ENCODE measurements at regions of chr17 and their contacts with region 1.

Region 1: DNA sequence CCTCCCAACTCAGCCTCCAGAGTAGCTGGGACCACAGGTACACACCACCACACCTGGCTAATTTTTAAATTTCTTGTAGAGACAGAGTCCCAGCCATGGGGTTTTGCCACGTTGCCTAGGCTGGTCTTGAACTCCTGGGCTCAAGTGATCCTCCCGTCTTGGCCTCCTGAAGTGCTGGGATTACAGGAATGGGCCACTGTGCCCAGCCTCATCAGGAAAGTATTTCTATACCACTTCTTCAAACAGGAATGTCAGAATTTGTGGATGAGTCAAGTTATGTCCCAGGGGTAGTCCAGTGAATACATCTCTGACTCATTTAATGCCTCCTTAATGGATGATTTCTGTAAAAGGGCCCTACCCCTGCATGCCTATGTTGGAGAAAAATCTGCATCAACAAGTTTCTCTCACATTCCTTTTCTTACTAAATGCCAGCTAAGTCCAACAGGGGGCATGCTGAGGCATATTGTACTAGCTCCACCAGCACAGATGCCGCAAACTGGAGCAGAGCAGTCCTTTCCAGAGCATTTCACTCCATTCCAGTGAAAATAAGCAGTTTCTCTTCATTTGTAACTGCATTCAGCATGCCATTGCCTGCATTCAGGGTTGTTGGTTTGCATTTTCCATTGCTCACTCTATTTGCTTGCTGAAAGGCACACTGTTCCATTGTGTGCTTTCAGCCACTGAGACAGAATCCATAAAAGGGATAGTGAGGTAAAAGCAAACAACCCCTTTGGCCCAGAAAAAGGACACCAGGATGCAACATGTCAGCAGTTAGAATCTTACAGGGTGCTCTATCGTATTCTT is 5.3 kb upstream of the CAVIN1 start:
- H3K4me3 ChIP-seq: no peak overlapping the region
- H3K27ac ChIP-seq: no peak overlapping the region; the same call in 1 of the 2 replicates
- H3K4me1 ChIP-seq: no peaks in the 10 kb centered on the region
- CTCF ChIP-seq: peak; percentile 57; the same call in 1 of the 2 replicates

Region 2: DNA sequence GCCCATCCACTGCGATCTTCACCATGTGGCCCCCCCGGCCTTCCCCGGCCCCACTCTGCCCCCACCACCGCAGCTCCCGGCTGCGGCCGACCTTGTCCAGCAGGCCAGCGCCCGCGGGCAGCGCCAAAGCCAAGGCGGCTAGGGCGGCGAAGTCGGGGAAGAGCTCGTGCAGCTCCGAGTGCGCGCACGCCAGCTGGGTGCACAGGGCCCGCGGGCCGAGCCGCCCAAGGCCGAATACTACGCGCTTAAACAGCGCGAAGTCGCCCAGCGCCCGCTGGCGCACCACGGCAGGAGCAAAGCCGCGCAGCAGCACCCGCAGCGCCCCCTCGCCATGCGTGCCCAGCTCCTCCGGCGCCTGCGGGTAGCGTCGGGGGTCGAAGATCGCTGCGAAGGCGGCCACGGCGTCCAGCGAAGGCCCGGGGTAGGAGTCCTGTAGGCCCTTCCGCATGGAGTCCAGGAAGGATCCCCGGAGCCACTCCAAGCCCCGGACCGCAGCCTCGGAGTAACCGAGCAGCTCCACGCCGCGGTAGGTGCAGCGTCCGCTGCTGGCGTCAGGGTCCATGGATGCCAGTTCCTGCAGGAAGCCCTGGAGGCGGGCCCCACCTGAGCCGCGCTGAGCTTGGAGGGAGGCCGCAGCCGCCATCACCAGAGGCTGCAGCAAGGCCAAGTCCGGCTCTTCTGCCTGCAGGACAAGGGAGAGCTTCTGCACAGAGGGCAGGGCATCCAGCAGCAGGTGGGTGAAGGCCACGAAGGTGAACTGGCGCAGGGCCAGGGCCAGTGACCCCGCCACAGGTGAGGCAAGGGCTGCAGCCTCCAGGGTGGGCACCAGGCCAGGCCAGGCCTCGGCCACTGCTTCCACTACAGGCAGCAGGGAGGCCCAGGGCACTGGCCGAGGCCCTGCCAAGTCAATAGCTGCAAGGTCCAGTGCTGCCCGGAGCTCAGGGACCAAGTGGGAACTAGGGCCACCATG is 388.3 kb before region 1 on chr17:
- CTCF ChIA-PET with region 1: no interaction called
- POLR2A ChIA-PET with region 1: no interaction called
- H3K4me3 ChIP-seq: no peak overlapping the region
- H3K27ac ChIP-seq: no peak overlapping the region
- H3K4me1 ChIP-seq: no peaks in the 10 kb centered on the region
- CTCF ChIP-seq: no peak

Region 3: GRCh38 chr17:42414704-42415409 is 13.5 kb before region 1 on chr17:
- CTCF ChIA-PET with region 1: interaction called, 11 read pairs
- POLR2A ChIA-PET with region 1: interaction called, 53 read pairs
- H3K4me3 ChIP-seq: no peak overlapping the region
- H3K27ac ChIP-seq: no peak overlapping the region
- H3K4me1 ChIP-seq: 0 out of 2 replicates have a peak, but pooled peaks cover 3% of the 10 kb centered on the region
- CTCF ChIP-seq: no peak

Region 4: GRCh38 chr17:42438600-42439567 is 10.5 kb after region 1 on chr17:
- CTCF ChIA-PET with region 1: interaction called, 33 read pairs
- POLR2A ChIA-PET with region 1: interaction called, 25 read pairs
- H3K4me3 ChIP-seq: no peak overlapping the region
- H3K27ac ChIP-seq: no peak overlapping the region
- H3K4me1 ChIP-seq: peaks cover 2% of the 10 kb centered on the region; the same call in 1 of the 2 replicates
- CTCF ChIP-seq: no peak; the same call in 1 of the 2 replicates

Region 5: GRCh38 chr17:42517516-42517915 is 89.2 kb after region 1 on chr17:
- CTCF ChIA-PET with region 1: interaction called, 28 read pairs
- POLR2A ChIA-PET with region 1: interaction called, 48 read pairs
- H3K4me3 ChIP-seq: no peak overlapping the region
- H3K27ac ChIP-seq: no peak overlapping the region
- H3K4me1 ChIP-seq: peaks cover 25% of the 10 kb centered on the region
- CTCF ChIP-seq: peak; percentile 94

Region 6: GRCh38 chr17:42527273-42527703 is 98.9 kb after region 1 on chr17:
- CTCF ChIA-PET with region 1: interaction called, 16 read pairs
- POLR2A ChIA-PET with region 1: interaction called, 10 read pairs
- H3K4me3 ChIP-seq: no peak overlapping the region
- H3K27ac ChIP-seq: no peak overlapping the region
- H3K4me1 ChIP-seq: peaks cover 15% of the 10 kb centered on the region
- CTCF ChIP-seq: peak; percentile 87

Region 7: GRCh38 chr17:42618442-42619150 is 190.3 kb after region 1 on chr17:
- CTCF ChIA-PET with region 1: no interaction called
- POLR2A ChIA-PET with region 1: no interaction called
- H3K4me3 ChIP-seq: no peak overlapping the region
- H3K27ac ChIP-seq: no peak overlapping the region
- H3K4me1 ChIP-seq: no peaks in the 10 kb centered on the region
- CTCF ChIP-seq: peak; percentile 90